ENCODE measurements at regions of chr2 and their contacts with region 1.

Region 1: GRCh38 chr2:118221666-118222594 is 133.7 kb downstream of the INSIG2 start:
- DNase-seq: peak; percentile 91
- ATAC-seq: peak; percentile 97
- H3K4me3 ChIP-seq: no peak overlapping the region
- H3K27ac ChIP-seq: no peak overlapping the region
- H3K4me1 ChIP-seq: peaks cover 4% of the 10 kb centered on the region; the same call in 1 of the 2 replicates
- H3K27me3 ChIP-seq: no peaks in the 10 kb centered on the region
- CTCF ChIP-seq: peak; percentile 87

Region 2: DNA sequence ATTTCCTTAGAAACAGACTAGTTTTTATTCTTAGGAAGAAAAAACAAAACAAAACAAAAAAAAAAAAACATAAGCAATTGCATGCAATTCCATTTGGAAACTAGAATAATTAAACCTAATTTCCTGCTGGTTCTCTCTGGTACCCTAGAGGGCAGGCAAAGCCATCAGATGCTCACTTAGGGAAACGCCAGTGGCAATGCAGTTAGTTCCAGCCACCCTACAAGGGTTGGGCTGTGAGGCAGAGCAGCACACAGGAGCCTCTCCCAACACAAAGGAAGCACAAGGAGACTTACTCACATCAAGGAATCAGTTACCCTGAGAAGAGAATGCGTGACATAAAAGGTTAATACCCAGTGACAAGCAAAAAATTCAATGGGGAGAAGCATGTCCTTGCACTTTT is 236.8 kb before region 1 on chr2:
- CTCF ChIA-PET with region 1: no interaction called
- POLR2A ChIA-PET with region 1: no interaction called
- intact Hi-C with region 1: no loop called
- DNase-seq: no peak
- ATAC-seq: no peak
- H3K4me3 ChIP-seq: no peak overlapping the region
- H3K27ac ChIP-seq: no peak overlapping the region
- H3K4me1 ChIP-seq: peaks cover 30% of the 10 kb centered on the region
- H3K27me3 ChIP-seq: no peaks in the 10 kb centered on the region
- CTCF ChIP-seq: 0 out of 2 replicates have a peak, but pooled peaks have one; percentile 15

Region 3: GRCh38 chr2:118242216-118242615 is 20.3 kb after region 1 on chr2:
- CTCF ChIA-PET with region 1: interaction called, 9 read pairs
- POLR2A ChIA-PET with region 1: interaction called, 3 read pairs
- intact Hi-C with region 1: loop called (anchors 1 kb)
- DNase-seq: peak; percentile 96
- ATAC-seq: peak; percentile 95
- H3K4me3 ChIP-seq: no peak overlapping the region
- H3K27ac ChIP-seq: peak overlapping the region; percentile 76
- H3K4me1 ChIP-seq: peaks cover 46% of the 10 kb centered on the region
- H3K27me3 ChIP-seq: no peaks in the 10 kb centered on the region
- CTCF ChIP-seq: no peak

Region 4: GRCh38 chr2:118371515-118371914 is 149.6 kb after region 1 on chr2:
- CTCF ChIA-PET with region 1: interaction called, 6 read pairs
- POLR2A ChIA-PET with region 1: no interaction called
- intact Hi-C with region 1: loop called (anchors 5 kb)
- DNase-seq: peak; percentile 75
- ATAC-seq: peak; percentile 92
- H3K4me3 ChIP-seq: no peak overlapping the region
- H3K27ac ChIP-seq: no peak overlapping the region
- H3K4me1 ChIP-seq: peaks cover 19% of the 10 kb centered on the region
- H3K27me3 ChIP-seq: no peaks in the 10 kb centered on the region
- CTCF ChIP-seq: peak; percentile 95

Region 5: DNA sequence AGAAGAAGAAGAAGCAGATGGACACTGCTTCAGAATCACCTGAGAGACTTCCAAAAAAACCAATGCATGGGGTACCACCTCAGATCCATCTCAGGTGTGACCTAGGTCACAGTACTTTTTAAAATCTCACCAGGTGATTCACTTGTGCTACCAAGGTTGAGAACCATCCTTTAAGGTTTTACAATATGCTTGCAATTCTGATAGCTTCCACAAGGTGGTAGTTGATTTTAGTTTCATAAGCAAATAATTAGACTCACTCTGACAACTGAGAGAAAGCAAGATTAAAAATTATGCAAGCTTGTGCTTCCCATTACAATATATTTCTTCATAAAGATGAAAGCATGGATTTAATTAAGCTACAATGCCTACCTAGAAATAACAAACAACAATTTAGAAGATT is 270.4 kb after region 1 on chr2:
- CTCF ChIA-PET with region 1: no interaction called
- POLR2A ChIA-PET with region 1: no interaction called
- intact Hi-C with region 1: loop called (anchors 5 kb)
- DNase-seq: peak; percentile 77
- ATAC-seq: peak; percentile 37; the same call in 1 of the 2 replicates
- H3K4me3 ChIP-seq: no peak overlapping the region
- H3K27ac ChIP-seq: no peak overlapping the region
- H3K4me1 ChIP-seq: no peaks in the 10 kb centered on the region
- H3K27me3 ChIP-seq: no peaks in the 10 kb centered on the region; the same call in 1 of the 2 replicates
- CTCF ChIP-seq: peak; percentile 69

Region 6: DNA sequence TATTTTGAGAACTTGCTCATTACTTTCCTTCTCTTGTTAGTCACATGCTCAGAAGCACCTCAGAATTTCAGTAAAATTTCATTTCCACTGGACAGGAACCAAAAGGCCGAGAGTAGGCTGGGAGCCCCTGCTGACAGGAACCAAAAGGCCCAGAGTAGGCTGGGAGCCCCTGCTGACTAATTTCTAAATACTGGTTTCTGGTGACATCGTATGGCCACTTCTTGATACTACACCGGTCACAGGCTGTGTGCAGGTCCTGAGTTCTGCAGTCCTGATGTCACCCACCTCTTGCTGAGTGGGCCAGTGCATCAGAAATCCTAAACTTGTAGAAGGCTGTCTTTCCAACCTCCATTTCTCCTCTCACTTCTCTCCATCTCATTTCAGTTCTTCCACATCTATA is 643.2 kb after region 1 on chr2:
- CTCF ChIA-PET with region 1: no interaction called
- POLR2A ChIA-PET with region 1: no interaction called
- intact Hi-C with region 1: loop called (anchors 1 kb)
- DNase-seq: peak; percentile 79
- ATAC-seq: peak; percentile 98
- H3K4me3 ChIP-seq: no peak overlapping the region
- H3K27ac ChIP-seq: no peak overlapping the region
- H3K4me1 ChIP-seq: peaks cover 16% of the 10 kb centered on the region
- H3K27me3 ChIP-seq: no peaks in the 10 kb centered on the region
- CTCF ChIP-seq: peak; percentile 84

Measured in PC-3 (cell line).